Esophagus squamous epithelium (tissue), 5 donors: ENCODE measurements at regions of chr9 and their contacts with region 1.

Region 1: GRCh38 chr9:133737774-133738639 is at the start of gene SARDH:
- DNase-seq: no peak
- H3K4me3 ChIP-seq: peak within 1 kb of the TSS; percentile 25 to 63 (median 34)
- H3K27ac ChIP-seq: no peak within 1 kb of the TSS
- H3K4me1 ChIP-seq: peaks cover 7 to 16% (median 9%) of the 10 kb centered on the region in 3 donors
- H3K27me3 ChIP-seq: peaks cover 0 to 28% (median 0%) of the 10 kb centered on the region in 4 donors
- CTCF ChIP-seq: no peak
- POLR2A ChIP-seq: no peak
- total RNA-seq, gene SARDH: 0.26 to 0.57 TPM in 2 of 4 donors, not detected in the others

Region 2: DNA sequence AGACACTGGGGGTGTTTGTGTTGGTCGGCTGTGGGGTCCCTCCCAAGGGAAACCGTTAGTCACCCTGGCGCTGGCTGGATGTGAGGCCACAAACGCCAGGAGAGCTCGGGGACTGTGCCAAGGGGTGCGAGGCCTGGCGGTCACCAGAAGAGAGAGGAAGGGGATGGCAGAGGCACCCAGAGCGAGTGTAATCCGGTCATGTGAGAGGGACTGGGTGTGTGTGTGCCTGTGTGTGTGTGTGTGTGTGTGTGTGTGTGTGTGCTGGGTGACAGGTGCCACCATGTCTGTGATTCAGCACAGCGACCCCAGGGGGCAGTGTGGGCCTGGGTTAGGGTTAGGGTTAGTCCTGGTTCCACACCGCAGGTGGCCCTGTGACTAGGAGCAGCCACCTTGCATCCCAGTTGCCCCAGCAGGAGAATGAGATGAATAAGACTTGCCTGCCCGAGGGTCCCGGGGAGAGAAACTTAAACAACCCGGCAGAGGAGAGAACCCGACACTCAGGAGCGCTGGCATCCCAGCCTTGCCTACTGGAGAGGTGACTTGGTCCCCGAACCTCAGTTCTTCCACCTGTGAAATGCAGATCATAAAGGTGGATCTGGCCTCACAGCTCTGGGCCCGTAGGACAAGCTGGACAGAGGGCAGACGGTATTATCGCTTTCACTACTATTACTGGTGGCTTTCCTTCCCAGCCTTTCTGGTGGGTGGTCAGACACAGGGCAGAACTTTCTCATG is 204.9 kb before region 1 on chr9:
- intact Hi-C with region 1: loop called (anchors 10 kb)
- DNase-seq: no peak
- H3K4me3 ChIP-seq: no peak overlapping the region
- H3K27ac ChIP-seq: no peak overlapping the region
- H3K4me1 ChIP-seq: peaks cover 0 to 48% (median 20%) of the 10 kb centered on the region in 3 donors
- H3K27me3 ChIP-seq: peaks cover 0 to 86% (median 0%) of the 10 kb centered on the region in 4 donors
- CTCF ChIP-seq: peak in 5 of 6 experiments; percentile 41 to 65 (median 52)
- POLR2A ChIP-seq: no peak

Region 3: DNA sequence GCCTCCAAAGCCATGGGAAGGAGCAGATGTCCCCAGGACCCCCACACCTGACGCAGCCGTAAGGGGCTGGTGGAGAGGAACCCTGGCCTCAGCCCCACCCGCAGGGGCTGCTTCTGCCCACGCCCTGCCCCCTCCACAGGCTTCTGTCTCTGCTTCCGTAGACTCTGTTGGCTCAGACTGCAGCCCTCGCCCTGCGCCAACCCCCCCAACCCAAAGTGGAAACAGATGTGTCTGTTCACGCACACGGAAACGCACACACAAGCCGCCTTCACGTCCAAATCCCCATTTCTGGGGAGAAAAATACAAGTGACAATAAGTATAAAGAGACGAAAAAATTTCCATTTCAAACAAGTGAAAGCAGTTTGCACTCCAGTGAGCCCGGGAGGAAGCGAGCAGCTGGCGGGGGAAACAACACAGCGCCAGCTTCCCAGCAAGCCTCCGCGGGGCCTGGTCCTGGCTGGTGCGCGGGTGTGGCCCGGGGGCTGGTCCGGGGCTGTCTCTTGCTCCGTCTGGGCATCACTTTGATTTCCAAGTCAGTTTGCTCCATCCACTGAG is 555.7 kb after region 1 on chr9:
- intact Hi-C with region 1: no loop called
- DNase-seq: no peak
- H3K4me3 ChIP-seq: peak overlapping the region in 3 of 4 donors; percentile 14 to 60 (median 24)
- H3K27ac ChIP-seq: peak overlapping the region in 2 of 4 donors; percentile 6 to 48
- H3K4me1 ChIP-seq: peaks cover 8 to 23% (median 15%) of the 10 kb centered on the region in 3 donors
- H3K27me3 ChIP-seq: peaks cover 0 to 56% (median 0%) of the 10 kb centered on the region in 4 donors
- CTCF ChIP-seq: no peak
- POLR2A ChIP-seq: no peak